Sigmoid colon (tissue), 7 donors: ENCODE measurements at regions of chr10 and their contacts with region 1.

Region 1: GRCh38 chr10:47311932-47312662 is 10.2 kb upstream of the GDF2 start:
- DNase-seq: peak; percentile 88
- H3K4me3 ChIP-seq: no peak overlapping the region
- H3K27ac ChIP-seq: no peak overlapping the region
- H3K4me1 ChIP-seq: peaks cover 0 to 5% (median 1%) of the 10 kb centered on the region in 4 donors
- H3K27me3 ChIP-seq: no peaks in the 10 kb centered on the region
- CTCF ChIP-seq: peak; percentile 63 to 82 (median 74)
- EP300 ChIP-seq: no peak
- POLR2A ChIP-seq: no peak

Region 2: GRCh38 chr10:47024399-47025252 is 287.5 kb before region 1 on chr10:
- intact Hi-C with region 1: loop called (anchors 2 kb)
- DNase-seq: peak; percentile 77
- H3K4me3 ChIP-seq: no peak overlapping the region
- H3K27ac ChIP-seq: no peak overlapping the region
- H3K4me1 ChIP-seq: no peaks in the 10 kb centered on the region
- H3K27me3 ChIP-seq: no peaks in the 10 kb centered on the region
- CTCF ChIP-seq: peak; percentile 37 to 81 (median 64)
- EP300 ChIP-seq: no peak
- POLR2A ChIP-seq: no peak

Region 3: DNA sequence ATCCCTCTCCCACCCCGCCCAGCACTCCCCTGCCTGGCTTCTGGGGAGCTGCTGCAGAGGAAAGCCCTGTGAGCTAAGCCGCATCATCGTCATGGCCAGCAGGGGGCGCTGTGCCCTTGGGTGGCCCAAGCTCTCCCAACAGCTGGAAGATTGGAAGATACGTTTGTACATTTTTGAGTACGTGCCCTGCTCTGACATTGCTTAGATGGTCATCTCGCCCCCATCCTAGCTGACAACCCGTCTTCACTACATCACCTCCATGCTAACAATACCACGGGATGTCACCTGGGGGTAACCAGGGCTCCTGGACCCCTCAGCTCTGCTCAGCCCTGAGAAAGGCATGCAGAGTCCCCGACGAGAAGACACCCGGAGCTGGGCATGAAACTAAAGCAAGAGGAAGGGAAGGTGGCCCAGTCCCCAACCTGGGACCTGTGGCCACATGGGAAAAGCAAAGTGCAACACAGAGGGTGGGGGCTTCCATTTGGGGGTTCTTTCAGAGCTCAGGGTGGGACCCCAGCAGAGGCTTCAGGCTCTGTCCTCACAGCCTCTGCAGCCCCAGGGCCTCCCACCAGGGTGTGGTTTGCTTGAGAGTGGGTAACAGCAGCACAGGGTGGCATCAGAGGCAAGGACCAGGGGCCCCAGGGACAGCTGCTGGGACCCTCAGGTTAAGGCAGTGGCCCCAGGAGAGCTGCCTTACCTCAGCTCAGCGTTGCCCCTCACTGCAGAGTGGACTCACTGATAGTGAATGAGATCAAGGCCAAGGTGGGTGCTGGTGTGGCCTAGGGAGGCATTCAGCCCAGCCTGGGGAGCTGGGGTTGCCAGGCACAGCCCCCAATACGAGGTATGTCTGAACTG is 264.2 kb before region 1 on chr10:
- intact Hi-C with region 1: loop called (anchors 2 kb)
- DNase-seq: peak; percentile 87
- H3K4me3 ChIP-seq: no peak overlapping the region
- H3K27ac ChIP-seq: no peak overlapping the region
- H3K4me1 ChIP-seq: no peaks in the 10 kb centered on the region
- H3K27me3 ChIP-seq: no peaks in the 10 kb centered on the region
- CTCF ChIP-seq: peak; percentile 18 to 78 (median 62)
- EP300 ChIP-seq: no peak
- POLR2A ChIP-seq: no peak

Region 4: DNA sequence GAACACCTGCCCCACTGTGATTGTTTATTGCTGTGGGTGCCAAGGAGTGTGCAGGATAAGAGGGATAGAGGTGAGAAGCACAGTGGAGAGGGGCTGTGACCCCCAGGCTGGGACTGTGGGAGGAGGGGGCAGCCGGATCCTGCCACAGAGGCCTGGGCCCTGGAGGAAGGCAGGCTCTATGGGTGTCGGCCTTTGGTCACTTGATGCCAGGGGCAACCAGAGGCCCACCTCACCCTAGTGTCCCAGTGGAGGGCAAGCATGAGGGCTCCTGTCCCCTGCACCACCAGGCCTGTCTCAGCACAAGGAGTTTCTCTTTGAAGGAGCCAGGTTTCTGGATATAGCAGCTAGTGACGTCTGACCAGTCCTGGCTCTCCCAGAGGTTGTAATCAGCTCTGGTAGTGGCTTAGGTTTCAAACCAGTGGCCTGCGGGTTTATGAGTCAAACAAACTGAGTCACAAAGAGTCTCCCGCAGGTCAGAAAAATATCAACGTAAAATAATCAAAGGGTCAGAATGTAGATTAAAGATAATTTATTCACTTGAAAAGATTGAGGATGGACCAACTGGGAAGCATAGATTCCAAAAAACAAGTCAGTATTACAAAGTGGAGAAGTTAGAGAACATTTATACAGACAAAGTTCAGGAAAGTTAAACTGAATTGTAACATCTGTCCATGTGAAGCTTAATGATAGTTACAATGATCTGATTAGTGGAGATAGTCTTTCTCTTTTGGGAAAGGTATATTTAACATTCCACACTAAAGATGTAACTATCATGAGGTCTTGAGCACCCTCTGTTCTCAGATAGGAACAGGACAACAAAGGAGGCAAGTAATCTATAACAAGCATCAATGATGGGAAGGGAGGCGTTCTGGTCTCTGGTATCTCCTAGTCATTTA is 109.2 kb after region 1 on chr10:
- intact Hi-C with region 1: no loop called
- DNase-seq: no peak
- H3K4me3 ChIP-seq: no peak overlapping the region
- H3K27ac ChIP-seq: no peak overlapping the region
- H3K4me1 ChIP-seq: no peaks in the 10 kb centered on the region
- H3K27me3 ChIP-seq: no peaks in the 10 kb centered on the region
- CTCF ChIP-seq: no peak
- EP300 ChIP-seq: no peak
- POLR2A ChIP-seq: no peak